Naive thymus-derived CD4-positive, alpha-beta T cell (primary cell): ENCODE measurements at regions of chr9 and their contacts with region 1.

Region 1: DNA sequence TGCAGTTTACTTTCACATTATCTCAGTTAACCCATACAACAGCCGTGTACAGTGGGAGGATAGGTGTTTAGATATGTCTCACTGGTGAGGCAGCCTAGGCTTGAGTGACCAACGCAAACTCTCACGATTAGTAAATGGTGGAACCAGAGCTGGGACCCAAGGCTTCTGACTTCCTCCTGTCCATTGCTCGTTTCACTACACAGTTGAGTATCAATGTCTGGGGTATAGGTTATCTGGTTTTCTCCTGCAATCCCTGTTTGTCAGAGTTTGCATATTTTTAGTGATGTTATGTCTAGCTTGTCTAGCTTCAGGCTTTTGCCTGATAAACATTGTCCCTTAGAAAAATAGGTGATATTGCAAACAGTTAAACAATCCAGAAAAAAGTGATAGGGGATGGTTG is 62.6 kb downstream of the NUP214 start:
- DNase-seq: no peak
- ATAC-seq: no peak
- H3K4me3 ChIP-seq: no peak overlapping the region
- H3K4me3 Mint-ChIP-seq: no peak overlapping the region
- H3K27ac ChIP-seq: no peak overlapping the region
- H3K27ac Mint-ChIP-seq: peak overlapping the region in 1 of 9 donors; percentile 48
- H3K4me1 ChIP-seq: no peaks in the 10 kb centered on the region
- H3K4me1 Mint-ChIP-seq: peaks cover 2 to 13% (median 5%) of the 10 kb centered on the region in 7 donors
- H3K27me3 ChIP-seq: no peaks in the 10 kb centered on the region
- H3K27me3 Mint-ChIP-seq: no peaks in the 10 kb centered on the region

Region 2: GRCh38 chr9:129932303-129933151 is 1255.4 kb before region 1 on chr9:
- CTCF ChIA-PET with region 1: no interaction called
- POLR2A ChIA-PET with region 1: no interaction called
- intact Hi-C with region 1: no loop called
- DNase-seq: no peak
- ATAC-seq: peak; percentile 54
- H3K4me3 ChIP-seq: peak overlapping the region; percentile 24
- H3K4me3 Mint-ChIP-seq: peak overlapping the region; percentile 36 to 79 (median 68)
- H3K27ac ChIP-seq: peak overlapping the region; percentile 31
- H3K27ac Mint-ChIP-seq: peak overlapping the region; percentile 60 to 95 (median 85)
- H3K4me1 ChIP-seq: peaks cover 20 to 35% of the 10 kb centered on the region in 2 donors
- H3K4me1 Mint-ChIP-seq: peaks cover 31 to 61% (median 56%) of the 10 kb centered on the region in 7 donors
- H3K27me3 ChIP-seq: no peaks in the 10 kb centered on the region
- H3K27me3 Mint-ChIP-seq: no peaks in the 10 kb centered on the region

Region 3: GRCh38 chr9:131167146-131167692 is 20.7 kb before region 1 on chr9:
- CTCF ChIA-PET with region 1: no interaction called
- POLR2A ChIA-PET with region 1: no interaction called
- intact Hi-C with region 1: no loop called
- DNase-seq: no peak
- ATAC-seq: no peak
- H3K4me3 ChIP-seq: no peak overlapping the region
- H3K4me3 Mint-ChIP-seq: no peak overlapping the region
- H3K27ac ChIP-seq: no peak overlapping the region
- H3K27ac Mint-ChIP-seq: peak overlapping the region in 4 of 9 donors; percentile 4 to 54 (median 20)
- H3K4me1 ChIP-seq: no peaks in the 10 kb centered on the region
- H3K4me1 Mint-ChIP-seq: peaks cover 4 to 21% (median 12%) of the 10 kb centered on the region in 7 donors
- H3K27me3 ChIP-seq: no peaks in the 10 kb centered on the region
- H3K27me3 Mint-ChIP-seq: no peaks in the 10 kb centered on the region

Region 4: GRCh38 chr9:131220485-131220884 is 32.5 kb after region 1 on chr9:
- CTCF ChIA-PET with region 1: no interaction called
- POLR2A ChIA-PET with region 1: no interaction called
- intact Hi-C with region 1: loop called in 1 of 2 experiments (anchors 5 kb)
- DNase-seq: no peak
- ATAC-seq: no peak
- H3K4me3 ChIP-seq: no peak overlapping the region
- H3K4me3 Mint-ChIP-seq: no peak overlapping the region
- H3K27ac ChIP-seq: no peak overlapping the region
- H3K27ac Mint-ChIP-seq: peak overlapping the region in 3 of 9 donors; percentile 2 to 31 (median 22)
- H3K4me1 ChIP-seq: no peaks in the 10 kb centered on the region
- H3K4me1 Mint-ChIP-seq: peaks cover 2 to 8% (median 5%) of the 10 kb centered on the region in 7 donors
- H3K27me3 ChIP-seq: no peaks in the 10 kb centered on the region
- H3K27me3 Mint-ChIP-seq: no peaks in the 10 kb centered on the region